ENCODE measurements at regions of chr11 and their contacts with region 1.

Region 1: GRCh38 chr11:74726547-74727182 is 4.6 kb downstream of the CHRDL2 start:
- DNase-seq: peak; percentile 35
- H3K4me3 Mint-ChIP-seq: no peak overlapping the region
- H3K27ac Mint-ChIP-seq: no peak overlapping the region
- H3K4me1 Mint-ChIP-seq: no peaks in the 10 kb centered on the region
- H3K27me3 Mint-ChIP-seq: peaks cover 55% of the 10 kb centered on the region

Region 2: GRCh38 chr11:74611369-74611861 is 115.2 kb before region 1 on chr11:
- intact Hi-C with region 1: loop called (anchors 1 kb)
- DNase-seq: no peak
- H3K4me3 Mint-ChIP-seq: no peak overlapping the region
- H3K27ac Mint-ChIP-seq: no peak overlapping the region
- H3K4me1 Mint-ChIP-seq: no peaks in the 10 kb centered on the region
- H3K27me3 Mint-ChIP-seq: no peaks in the 10 kb centered on the region

Region 3: GRCh38 chr11:74702383-74703007 is 24.2 kb before region 1 on chr11:
- intact Hi-C with region 1: loop called (anchors 1 kb)
- DNase-seq: peak; percentile 26
- H3K4me3 Mint-ChIP-seq: no peak overlapping the region
- H3K27ac Mint-ChIP-seq: no peak overlapping the region
- H3K4me1 Mint-ChIP-seq: peaks cover 2% of the 10 kb centered on the region
- H3K27me3 Mint-ChIP-seq: peaks cover 7% of the 10 kb centered on the region

Measured in activated T-helper 1 cell treated with anti-CD3 and anti-CD28 coated beads, Interleukin-12 subunit alpha, Interleukin-12 subunit beta, Interleukin-2, Interleukin-4 antibody, amounts not matched to agents 30 ng/mL and 10 ng/mL and 1 ng/mL, durations not matched to agents 14 hours and 24 hours and 36 hours (primary cell).